ENCODE measurements at regions of chr22 and their contacts with region 1.

Region 1: GRCh38 chr22:36787204-36787988 is 11.5 kb upstream of the IFT27 start:
- DNase-seq: no peak
- H3K4me3 ChIP-seq: no peak overlapping the region
- H3K27ac ChIP-seq: no peak overlapping the region
- H3K4me1 ChIP-seq: peaks cover 0 to 9% (median 1%) of the 10 kb centered on the region in 4 donors
- H3K27me3 ChIP-seq: peaks cover 0 to 49% (median 0%) of the 10 kb centered on the region in 3 donors
- CTCF ChIP-seq: no peak
- EP300 ChIP-seq: no peak
- POLR2A ChIP-seq: no peak

Region 2: DNA sequence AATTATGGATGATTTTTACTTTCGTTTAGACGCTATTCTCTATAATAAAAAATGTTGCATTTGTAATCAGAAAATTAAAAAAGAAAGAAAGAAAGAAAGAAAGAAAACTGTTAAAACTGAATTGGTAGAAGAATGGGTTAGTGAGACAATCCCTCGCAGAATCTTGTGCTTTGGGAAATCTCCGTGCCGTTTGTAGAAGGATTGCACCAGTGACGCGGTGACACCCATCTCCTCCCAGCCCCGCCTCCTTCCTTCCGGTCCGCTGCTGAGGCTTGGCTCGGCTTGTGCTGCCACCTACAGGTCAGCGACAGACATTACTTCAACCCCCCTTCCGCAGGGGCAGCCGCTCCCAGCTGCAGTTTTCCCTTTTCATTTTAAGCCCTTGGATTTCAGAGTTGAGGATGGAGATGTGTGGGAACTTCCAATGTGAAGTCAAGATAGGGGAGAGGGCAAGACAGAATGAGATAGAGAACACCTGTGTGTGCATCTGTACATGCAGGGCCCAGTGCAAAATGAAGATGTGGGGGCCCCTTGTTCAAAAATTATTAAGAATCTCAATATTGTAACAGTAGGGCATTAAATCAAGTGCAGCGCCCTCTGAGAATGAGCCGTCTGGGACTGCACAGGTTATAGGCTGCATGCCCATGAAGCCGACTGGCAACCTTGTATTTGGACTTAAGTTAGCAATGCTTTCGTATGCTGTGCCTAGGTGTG is 190.7 kb after region 1 on chr22:
- intact Hi-C with region 1: loop called (anchors 5 kb)
- DNase-seq: peak; percentile 92 to 96
- H3K4me3 ChIP-seq: peak overlapping the region; percentile 36 to 42 (median 41)
- H3K27ac ChIP-seq: peak overlapping the region in 4 of 5 donors; percentile 14 to 69 (median 62)
- H3K4me1 ChIP-seq: peaks cover 5 to 12% (median 10%) of the 10 kb centered on the region in 4 donors
- H3K27me3 ChIP-seq: peaks cover 0 to 13% (median 0%) of the 10 kb centered on the region in 3 donors
- CTCF ChIP-seq: peak in 5 of 7 experiments; percentile 90 to 95 (median 94)
- EP300 ChIP-seq: no peak
- POLR2A ChIP-seq: no peak

Region 3: GRCh38 chr22:37212167-37212906 is 424.9 kb after region 1 on chr22 and contains the start of gene SSTR3:
- intact Hi-C with region 1: no loop called
- DNase-seq: peak in 1 of 2 donors; percentile 77
- H3K4me3 ChIP-seq: no peak within 1 kb of the TSS
- H3K27ac ChIP-seq: no peak within 1 kb of the TSS
- H3K4me1 ChIP-seq: no peaks in the 10 kb centered on the region
- H3K27me3 ChIP-seq: peaks cover 0 to 40% (median 9%) of the 10 kb centered on the region in 3 donors
- CTCF ChIP-seq: no peak
- EP300 ChIP-seq: no peak
- POLR2A ChIP-seq: no peak
- total RNA-seq, gene SSTR3: 0.37 TPM in 1 of 5 donors, not detected in the others